GM23248 (cell line): ENCODE measurements at regions of chr7 and their contacts with region 1.

Region 1: DNA sequence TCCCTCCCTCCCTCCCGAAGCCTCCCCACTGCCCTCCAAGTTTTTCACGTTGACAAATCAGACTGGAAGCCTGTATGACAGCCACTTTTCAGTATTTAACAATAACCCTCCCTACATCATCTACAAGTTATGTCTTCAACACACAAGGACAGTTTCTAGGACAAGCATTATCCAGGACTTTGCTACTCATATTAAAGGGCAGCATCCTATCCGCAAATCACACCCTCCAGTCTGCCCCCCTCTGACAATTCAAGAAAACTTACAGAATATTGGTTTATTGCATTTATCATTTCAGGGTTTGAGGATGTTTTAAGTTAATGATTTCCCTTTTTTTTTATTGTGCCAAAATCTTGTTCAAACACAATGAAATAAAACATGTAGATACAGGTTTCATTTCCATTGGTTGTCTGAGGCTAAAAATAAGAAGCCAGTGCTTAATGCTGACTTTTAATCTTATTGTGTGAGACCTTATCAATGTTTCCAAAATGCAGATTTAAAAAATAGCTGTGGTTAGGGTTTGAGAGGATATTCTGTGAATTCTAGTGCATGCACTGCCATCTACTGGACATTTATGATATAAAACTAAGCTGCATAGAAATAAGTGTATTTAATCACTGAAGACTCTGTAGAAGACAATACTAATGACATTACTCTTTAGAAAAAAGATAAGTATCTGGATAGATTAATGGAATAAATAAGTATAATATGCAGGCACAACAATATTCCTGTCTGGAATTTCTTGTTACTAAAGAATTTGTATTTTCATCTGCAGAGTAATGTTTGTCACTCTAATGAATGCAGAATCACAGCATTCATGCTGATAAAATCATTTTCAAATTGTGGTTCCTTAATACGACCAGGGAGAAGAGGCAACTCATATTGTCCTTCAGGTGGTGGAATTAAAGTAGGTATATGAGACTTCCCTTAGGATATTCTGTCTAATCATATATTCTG is 64.1 kb downstream of the CAV1 start:
- DNase-seq: peak; percentile 70
- H3K4me3 ChIP-seq: no peak overlapping the region
- H3K27ac ChIP-seq: peak overlapping the region; percentile 76
- H3K4me1 ChIP-seq: peaks cover 25% of the 10 kb centered on the region
- H3K27me3 ChIP-seq: no peaks in the 10 kb centered on the region

Region 2: DNA sequence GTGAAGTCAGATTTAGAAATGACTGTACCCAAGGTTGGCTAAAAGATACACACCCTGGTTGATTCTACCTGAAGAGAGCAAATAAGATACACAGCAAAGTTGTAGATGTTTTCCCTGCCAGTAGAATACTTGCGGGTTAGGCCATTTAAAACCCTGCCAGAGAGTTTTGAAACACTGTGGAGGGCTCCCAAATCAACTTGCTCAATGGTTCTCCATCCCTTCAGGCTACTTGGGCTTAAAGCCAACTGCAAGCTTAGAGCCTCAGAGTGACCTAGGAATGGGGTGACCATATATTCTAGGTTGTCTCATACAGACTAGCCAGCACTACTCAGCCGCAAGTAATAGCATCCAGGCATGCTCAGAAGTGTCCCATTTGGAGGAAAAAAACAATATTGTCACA is 54.1 kb before region 1 on chr7:
- in situ Hi-C with region 1: loop called (anchors 10 kb)
- DNase-seq: peak; percentile 64
- H3K4me3 ChIP-seq: peak overlapping the region; percentile 39
- H3K27ac ChIP-seq: peak overlapping the region; percentile 50
- H3K4me1 ChIP-seq: peaks cover 59% of the 10 kb centered on the region
- H3K27me3 ChIP-seq: no peaks in the 10 kb centered on the region